ENCODE measurements at regions of chr19 and their contacts with region 1.

Region 1: GRCh38 chr19:920051-920864 is 3.1 kb downstream of the KISS1R start:
- DNase-seq: no peak
- ATAC-seq: no peak
- H3K4me3 ChIP-seq: peak overlapping the region in 8 of 12 donors; percentile 5 to 51 (median 20)
- H3K27ac ChIP-seq: peak overlapping the region in 1 of 12 donors; percentile 37
- H3K4me1 ChIP-seq: peaks cover 7 to 61% (median 34%) of the 10 kb centered on the region in 12 donors
- H3K27me3 ChIP-seq: peaks cover 38 to 54% (median 48%) of the 10 kb centered on the region in 9 donors
- CTCF ChIP-seq: no peak
- POLR2A ChIP-seq: no peak

Region 2: GRCh38 chr19:892243-893050 is 27.8 kb before region 1 on chr19:
- intact Hi-C with region 1: loop called in 1 of 10 experiments (anchors 2 kb)
- DNase-seq: no peak
- ATAC-seq: peak; percentile 3 to 72 (median 43)
- H3K4me3 ChIP-seq: peak overlapping the region; percentile 50 to 95 (median 88)
- H3K27ac ChIP-seq: peak overlapping the region; percentile 83 to 98 (median 93)
- H3K4me1 ChIP-seq: peaks cover 0 to 16% (median 6%) of the 10 kb centered on the region in 12 donors
- H3K27me3 ChIP-seq: no peaks in the 10 kb centered on the region
- CTCF ChIP-seq: no peak
- POLR2A ChIP-seq: no peak

Region 3: DNA sequence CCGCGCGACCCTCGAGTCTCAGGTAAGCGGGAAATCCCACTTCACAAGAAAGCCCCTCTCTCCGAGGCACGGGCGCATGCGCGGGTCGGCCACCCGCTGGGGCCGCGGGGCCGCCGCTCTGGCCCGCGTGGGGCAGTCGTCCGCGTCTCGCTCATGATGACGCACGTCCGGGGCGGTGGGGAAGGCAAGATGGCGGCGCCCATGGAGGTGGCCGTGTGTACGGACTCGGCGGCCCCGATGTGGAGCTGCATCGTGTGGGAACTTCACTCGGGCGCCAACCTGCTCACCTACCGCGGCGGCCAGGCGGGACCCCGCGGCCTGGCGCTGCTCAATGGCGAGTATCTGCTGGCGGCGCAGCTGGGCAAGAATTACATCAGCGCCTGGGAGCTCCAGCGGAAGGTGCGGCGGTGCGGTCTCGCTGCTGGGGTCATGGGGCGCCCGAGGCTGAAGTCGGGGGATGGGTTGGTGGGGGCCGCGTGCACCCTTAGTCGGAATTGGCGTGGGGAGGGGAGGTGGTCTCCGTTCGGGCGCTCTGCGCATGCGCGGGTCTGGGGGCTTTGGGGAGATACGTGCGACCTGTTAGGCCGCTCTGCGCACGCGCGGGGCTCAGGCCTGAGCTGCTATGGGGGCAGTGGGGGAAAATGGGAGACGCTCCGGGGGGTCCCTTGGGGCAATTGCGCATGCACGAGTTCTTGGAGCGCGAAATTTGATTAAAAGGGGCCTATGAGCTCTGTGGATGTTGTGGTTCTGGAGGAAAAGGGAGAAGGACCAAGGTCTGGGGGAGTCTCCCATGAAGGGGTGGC is 64.1 kb after region 1 on chr19 and contains the start of gene WDR18:
- intact Hi-C with region 1: loop called (anchors 1 to 2 kb)
- DNase-seq: peak; percentile 94 to 97 (median 94)
- ATAC-seq: peak; percentile 87 to 97 (median 96)
- H3K4me3 ChIP-seq: peak within 1 kb of the TSS; percentile 80 to 100 (median 91)
- H3K27ac ChIP-seq: peak within 1 kb of the TSS; percentile 67 to 92 (median 86)
- H3K4me1 ChIP-seq: peaks cover 3 to 38% (median 19%) of the 10 kb centered on the region in 12 donors
- H3K27me3 ChIP-seq: no peaks in the 10 kb centered on the region
- CTCF ChIP-seq: peak in 8 of 12 donors; percentile 11 to 50 (median 34)
- POLR2A ChIP-seq: peak in 1 of 2 donors; percentile 57
- total RNA-seq, gene WDR18: 15.6 to 36.3 (median 19.2) TPM